ENCODE measurements at regions of chr17 and their contacts with region 1.

Region 1: GRCh38 chr17:72472106-72472505 is 351.3 kb downstream of the SOX9 start:
- DNase-seq: no peak
- ATAC-seq: no peak
- H3K4me3 ChIP-seq: no peak overlapping the region
- H3K27ac ChIP-seq: peak overlapping the region; percentile 98
- H3K4me1 ChIP-seq: peaks cover 87% of the 10 kb centered on the region
- H3K27me3 ChIP-seq: no peaks in the 10 kb centered on the region
- CTCF ChIP-seq: no peak

Region 2: DNA sequence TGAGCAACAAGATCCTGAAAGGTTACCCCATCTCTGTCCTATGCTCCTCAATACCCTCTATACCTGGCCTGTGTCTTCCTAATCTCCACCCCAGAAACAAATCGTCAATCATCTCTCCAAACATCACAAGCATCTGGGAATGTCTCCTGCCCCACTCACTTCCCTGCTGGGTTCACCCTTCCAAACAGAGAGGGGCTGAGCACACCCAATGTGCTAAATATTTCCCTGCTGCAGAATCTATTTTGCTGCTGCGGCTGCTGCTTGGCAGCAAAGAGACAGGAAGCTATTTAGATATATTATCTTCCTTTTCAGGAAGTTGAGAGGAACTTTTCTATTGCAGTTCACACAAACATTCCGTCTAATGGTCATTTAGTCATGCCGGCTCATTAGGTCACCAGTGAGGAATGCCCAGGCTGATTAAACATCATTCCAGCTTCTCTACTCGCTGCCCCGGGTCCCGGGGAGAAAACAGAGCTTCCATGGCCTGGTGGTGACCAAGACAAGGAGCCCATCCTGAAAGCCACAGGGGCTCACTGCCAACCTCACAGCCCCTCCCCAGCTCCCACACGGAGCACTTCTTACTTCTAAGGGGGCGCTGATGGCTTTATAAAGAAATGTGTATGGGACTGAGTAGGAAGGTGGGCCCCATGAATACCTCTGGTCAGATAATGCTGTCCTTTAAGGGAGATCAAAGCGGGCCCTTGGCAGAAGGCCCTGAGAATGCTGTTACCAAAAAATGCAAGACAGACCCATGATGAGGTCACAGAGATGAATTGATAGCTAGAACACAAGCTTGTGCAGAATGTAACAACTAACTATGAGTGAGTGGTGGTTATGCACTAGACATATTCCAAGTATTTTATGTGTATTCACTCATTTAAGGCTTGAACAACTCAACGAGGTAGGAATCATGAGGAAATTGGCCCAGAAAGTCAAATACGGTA is 133.0 kb before region 1 on chr17:
- CTCF ChIA-PET with region 1: no interaction called
- POLR2A ChIA-PET with region 1: interaction called, 10 read pairs
- in situ Hi-C with region 1: no loop called
- intact Hi-C with region 1: no loop called
- DNase-seq: peak; percentile 79
- ATAC-seq: peak; percentile 93
- H3K4me3 ChIP-seq: peak overlapping the region in 1 of 2 experiments; percentile 8; a peak in 1 of 4 replicates
- H3K27ac ChIP-seq: peak overlapping the region; percentile 75
- H3K4me1 ChIP-seq: peaks cover 23% of the 10 kb centered on the region
- H3K27me3 ChIP-seq: no peaks in the 10 kb centered on the region
- CTCF ChIP-seq: no peak

Region 3: DNA sequence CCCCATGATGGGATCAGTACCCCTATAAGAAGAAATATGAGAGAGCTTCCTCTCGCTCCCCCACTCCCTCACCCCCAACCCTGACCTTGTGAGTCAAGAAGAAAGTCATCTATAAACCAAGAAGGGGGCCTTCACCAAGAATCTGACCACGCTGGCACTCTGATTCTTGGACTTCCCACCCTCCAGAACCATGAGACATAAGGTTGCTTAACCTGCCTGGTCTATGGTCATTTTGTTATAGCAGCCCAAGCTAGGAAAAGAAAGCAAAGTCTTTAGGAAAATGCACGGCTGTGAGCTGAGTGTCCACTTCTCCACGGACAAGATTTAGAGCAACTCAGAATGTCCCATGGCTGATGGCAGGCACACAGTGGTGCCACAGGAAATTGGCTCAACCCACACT is 17.8 kb before region 1 on chr17:
- CTCF ChIA-PET with region 1: interaction called, 14 read pairs
- POLR2A ChIA-PET with region 1: no interaction called
- in situ Hi-C with region 1: no loop called
- intact Hi-C with region 1: no loop called
- DNase-seq: no peak
- ATAC-seq: no peak
- H3K4me3 ChIP-seq: no peak overlapping the region
- H3K27ac ChIP-seq: peak overlapping the region; percentile 37
- H3K4me1 ChIP-seq: peaks cover 87% of the 10 kb centered on the region
- H3K27me3 ChIP-seq: no peaks in the 10 kb centered on the region
- CTCF ChIP-seq: no peak

Measured in Panc1 (cell line).